Motor neuron (in vitro differentiated cells): ENCODE measurements at regions of chr5 and their contacts with region 1.

Region 1: GRCh38 chr5:38809388-38810359 is 36.1 kb upstream of the OSMR start:
- ATAC-seq: peak; percentile 27 to 88 (median 82)
- H3K4me3 ChIP-seq: no peak overlapping the region
- H3K27ac ChIP-seq: no peak overlapping the region
- H3K4me1 ChIP-seq: peaks cover 8 to 14% of the 10 kb centered on the region in 2 donors

Region 2: GRCh38 chr5:38265546-38266179 is 544.0 kb before region 1 on chr5:
- in situ Hi-C with region 1: loop called in 1 of 9 experiments (anchors 25 kb)
- ATAC-seq: peak; percentile 82 to 100 (median 90)
- H3K4me3 ChIP-seq: no peak overlapping the region
- H3K27ac ChIP-seq: no peak overlapping the region
- H3K4me1 ChIP-seq: no peaks in the 10 kb centered on the region

Region 3: GRCh38 chr5:38433160-38433861 is 376.4 kb before region 1 on chr5:
- in situ Hi-C with region 1: loop called (anchors 10 to 25 kb)
- ATAC-seq: peak in 3 of 8 experiments; percentile 14 to 74 (median 57)
- H3K4me3 ChIP-seq: no peak overlapping the region
- H3K27ac ChIP-seq: no peak overlapping the region
- H3K4me1 ChIP-seq: peaks cover 4 to 11% of the 10 kb centered on the region in 2 donors

Region 4: GRCh38 chr5:38441453-38442246 is 368.0 kb before region 1 on chr5:
- in situ Hi-C with region 1: loop called (anchors 10 to 25 kb)
- ATAC-seq: peak; percentile 94 to 100 (median 100)
- H3K4me3 ChIP-seq: no peak overlapping the region
- H3K27ac ChIP-seq: no peak overlapping the region
- H3K4me1 ChIP-seq: no peaks in the 10 kb centered on the region

Region 5: GRCh38 chr5:38556599-38557305 is 252.9 kb before region 1 on chr5 and contains the start of gene LIFR:
- in situ Hi-C with region 1: loop called in 2 of 9 experiments (anchors 25 kb)
- ATAC-seq: peak; percentile 73 to 91 (median 84)
- H3K4me3 ChIP-seq: peak within 1 kb of the TSS; percentile 77 to 95 (median 82)
- H3K27ac ChIP-seq: peak within 1 kb of the TSS; percentile 84 to 90
- H3K4me1 ChIP-seq: peaks cover 6 to 27% of the 10 kb centered on the region in 2 donors
- total RNA-seq, gene LIFR: 20.6 to 631 (median 74.4) TPM

Region 6: DNA sequence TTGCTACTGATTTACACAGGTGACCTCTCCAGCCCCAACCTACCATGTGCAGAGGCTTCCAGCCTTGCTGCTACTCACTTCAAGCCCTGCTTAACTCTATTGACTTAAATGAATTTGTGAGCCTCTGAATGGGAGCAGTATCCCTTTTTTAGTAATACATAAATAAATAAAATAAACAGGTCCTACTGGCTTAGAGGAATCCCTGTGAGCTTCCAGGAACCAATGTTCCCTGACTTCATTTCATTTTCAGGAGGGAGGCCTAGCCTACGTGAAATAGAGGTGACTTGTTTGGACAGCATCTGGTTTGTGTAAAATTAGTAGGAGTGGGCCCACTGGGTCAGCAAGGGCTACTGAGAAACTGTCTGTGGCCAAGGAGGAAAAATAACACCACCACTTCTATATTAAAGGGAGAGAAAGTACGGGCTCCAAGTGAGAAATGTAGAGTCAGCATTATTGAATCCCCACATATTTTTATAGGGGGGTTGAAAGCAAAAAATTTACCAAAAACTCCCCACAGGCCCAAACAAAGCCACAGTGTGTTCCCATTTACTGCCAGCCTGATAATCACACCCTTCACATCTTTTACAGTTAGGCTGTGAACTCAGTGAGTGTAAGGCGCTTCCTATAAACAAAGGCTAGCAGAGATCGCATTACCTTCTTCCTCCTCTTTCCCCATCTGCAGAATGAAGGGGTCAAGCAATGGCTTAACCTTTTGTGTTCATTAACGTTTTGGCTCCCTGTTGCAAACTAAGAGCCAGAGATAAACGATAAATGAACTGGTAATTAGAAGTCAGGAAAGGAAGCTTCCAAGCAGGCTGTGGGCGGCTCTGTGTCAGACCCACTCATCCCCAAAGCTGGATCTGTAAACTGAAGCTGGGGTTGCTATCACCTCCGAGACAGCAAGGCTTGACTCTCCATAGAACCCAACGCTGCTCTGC is 114.4 kb before region 1 on chr5:
- in situ Hi-C with region 1: loop called in 1 of 9 experiments (anchors 25 kb)
- ATAC-seq: no peak
- H3K4me3 ChIP-seq: no peak overlapping the region
- H3K27ac ChIP-seq: no peak overlapping the region
- H3K4me1 ChIP-seq: no peaks in the 10 kb centered on the region

Region 7: GRCh38 chr5:38925154-38925925 is 115.7 kb after region 1 on chr5:
- in situ Hi-C with region 1: no loop called
- ATAC-seq: peak in 2 of 8 experiments; percentile 4 to 18
- H3K4me3 ChIP-seq: no peak overlapping the region
- H3K27ac ChIP-seq: no peak overlapping the region
- H3K4me1 ChIP-seq: no peaks in the 10 kb centered on the region